ENCODE measurements at regions of chr18 and their contacts with region 1.

Region 1: DNA sequence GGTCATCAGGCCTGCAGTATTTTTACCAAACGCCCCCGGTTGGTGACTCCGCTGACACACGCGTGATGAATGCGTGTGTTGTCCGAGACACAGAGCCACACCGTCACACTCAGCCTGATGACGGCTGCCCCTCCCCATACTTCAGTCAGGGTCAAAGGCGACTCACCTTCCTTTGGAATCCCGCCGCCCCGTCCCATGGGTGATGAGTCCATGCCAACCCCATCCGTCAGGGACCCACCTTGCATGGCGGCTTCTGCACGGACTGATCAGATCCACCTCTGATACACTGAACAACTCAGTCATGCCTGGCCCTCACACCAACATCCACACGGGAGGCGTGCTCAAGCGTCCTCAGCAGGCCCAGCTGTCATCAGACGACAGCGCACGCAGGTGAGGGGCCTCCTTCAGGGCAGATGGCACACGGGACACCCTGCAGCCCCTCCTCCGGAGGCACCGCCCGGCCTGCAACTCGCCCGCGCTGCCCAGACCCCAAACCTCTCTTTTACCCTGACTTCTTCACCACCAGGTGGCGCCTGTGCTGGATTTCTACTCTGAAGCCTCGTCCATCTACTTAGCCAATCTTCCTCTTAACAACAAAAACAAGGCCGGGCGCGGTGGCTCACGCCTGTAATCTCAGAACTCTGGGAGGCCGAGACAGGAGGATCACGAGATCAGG is 89.2 kb downstream of the ZNF516 start:
- DNase-seq: peak; percentile 27
- ATAC-seq: peak; percentile 93
- H3K4me3 ChIP-seq: no peak overlapping the region
- H3K27ac ChIP-seq: no peak overlapping the region
- H3K4me1 ChIP-seq: no peaks in the 10 kb centered on the region
- H3K27me3 ChIP-seq: no peaks in the 10 kb centered on the region
- CTCF ChIP-seq: peak; percentile 56 to 61 (median 60); a peak in 5 of 6 replicates
- POLR2A ChIP-seq: no peak
- RAD21 ChIP-seq: peak; percentile 69

Region 2: DNA sequence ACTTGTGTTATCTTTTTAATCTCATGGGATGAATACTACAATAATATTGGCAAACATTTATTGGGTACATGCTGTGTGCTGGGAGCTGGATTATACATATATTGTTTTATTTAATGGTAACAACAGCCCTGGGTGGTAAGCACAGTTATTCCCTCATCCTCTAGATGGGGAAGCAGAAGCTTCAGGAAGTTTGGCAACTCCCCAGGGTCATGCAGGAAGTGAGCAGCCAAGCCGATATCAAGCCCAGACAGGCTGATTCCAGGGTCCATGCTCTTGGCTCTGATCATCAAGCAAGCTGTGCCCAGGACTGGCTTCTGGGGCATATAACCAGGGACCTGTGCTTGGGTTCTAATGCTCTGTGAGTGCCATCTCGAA is 66.6 kb before region 1 on chr18:
- CTCF ChIA-PET with region 1: no interaction called
- POLR2A ChIA-PET with region 1: no interaction called
- RAD21 ChIA-PET with region 1: no interaction called
- intact Hi-C with region 1: no loop called
- DNase-seq: no peak
- ATAC-seq: no peak
- H3K4me3 ChIP-seq: no peak overlapping the region
- H3K27ac ChIP-seq: no peak overlapping the region
- H3K4me1 ChIP-seq: no peaks in the 10 kb centered on the region
- H3K27me3 ChIP-seq: peaks cover 20% of the 10 kb centered on the region; the same call in 1 of the 2 replicates
- CTCF ChIP-seq: no peak
- POLR2A ChIP-seq: no peak
- RAD21 ChIP-seq: no peak

Region 3: DNA sequence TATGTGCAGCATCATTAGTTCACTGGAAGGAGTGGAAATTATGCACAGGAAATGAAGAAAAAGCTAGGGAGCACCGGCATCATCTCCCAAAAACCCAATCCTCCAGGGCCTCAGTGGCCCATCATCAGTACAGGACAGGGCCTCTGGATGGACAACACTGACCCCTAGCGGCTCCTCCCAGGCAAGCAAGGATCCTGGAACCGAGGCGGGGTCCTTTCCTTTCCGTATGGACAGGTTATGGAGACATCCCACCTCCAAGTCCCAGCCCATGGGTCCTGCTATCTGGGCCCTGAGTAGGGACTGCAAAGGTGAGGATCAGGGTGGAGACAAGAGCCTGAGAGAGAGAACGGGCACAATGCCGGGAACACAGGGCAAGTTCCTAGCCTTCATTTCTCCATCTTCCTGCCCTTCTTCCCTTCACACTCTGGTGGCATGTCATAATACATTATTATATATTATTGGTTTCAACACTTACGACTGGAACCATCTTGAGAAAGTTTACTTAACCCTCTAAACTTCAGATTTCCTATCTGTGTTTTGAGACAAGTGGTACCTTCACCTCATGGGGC is 21.0 kb after region 1 on chr18:
- CTCF ChIA-PET with region 1: no interaction called
- POLR2A ChIA-PET with region 1: no interaction called
- RAD21 ChIA-PET with region 1: no interaction called
- intact Hi-C with region 1: loop called (anchors 1 kb)
- DNase-seq: peak; percentile 13
- ATAC-seq: peak; percentile 91
- H3K4me3 ChIP-seq: no peak overlapping the region
- H3K27ac ChIP-seq: no peak overlapping the region
- H3K4me1 ChIP-seq: peaks cover 0 to 3% of the 10 kb centered on the region in 2 experiments; a peak in 1 of 4 replicates
- H3K27me3 ChIP-seq: no peaks in the 10 kb centered on the region
- CTCF ChIP-seq: peak; percentile 12 to 83 (median 79); a peak in 4 of 6 replicates
- POLR2A ChIP-seq: no peak
- RAD21 ChIP-seq: peak; percentile 39

Region 4: DNA sequence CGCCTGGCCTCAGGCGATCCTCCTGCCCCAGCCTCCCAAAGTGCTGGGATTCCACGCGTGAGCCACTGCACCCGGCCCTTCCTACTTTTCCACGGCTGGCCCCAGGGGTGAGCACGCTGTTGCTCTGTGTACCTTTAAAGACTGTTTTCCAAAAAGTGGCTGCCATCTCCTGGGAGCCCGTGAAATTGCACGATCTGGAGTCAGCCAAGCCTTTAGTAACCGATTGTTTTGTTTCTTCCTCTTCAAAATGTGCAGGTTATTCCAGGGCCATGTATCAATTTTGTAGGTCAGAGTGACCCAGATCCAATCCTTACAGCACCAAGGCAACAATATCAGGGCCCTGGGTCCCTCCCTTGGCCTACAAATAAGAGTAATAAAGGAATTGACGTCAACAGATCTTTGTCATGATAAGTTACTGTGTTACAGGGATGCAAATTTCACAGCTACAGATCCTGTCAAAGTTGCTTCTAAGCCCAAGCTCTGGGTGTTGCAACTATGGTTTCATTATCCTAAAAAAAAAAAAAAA is 281.0 kb after region 1 on chr18:
- CTCF ChIA-PET with region 1: interaction called, 9 read pairs
- POLR2A ChIA-PET with region 1: no interaction called
- RAD21 ChIA-PET with region 1: no interaction called
- intact Hi-C with region 1: loop called (anchors 1 kb)
- DNase-seq: peak; percentile 44
- ATAC-seq: peak; percentile 96
- H3K4me3 ChIP-seq: no peak overlapping the region
- H3K27ac ChIP-seq: no peak overlapping the region
- H3K4me1 ChIP-seq: peaks cover 2 to 6% of the 10 kb centered on the region in 2 experiments; a peak in 2 of 4 replicates
- H3K27me3 ChIP-seq: peaks cover 16% of the 10 kb centered on the region
- CTCF ChIP-seq: peak; percentile 63 to 74 (median 70); a peak in 5 of 6 replicates
- POLR2A ChIP-seq: no peak
- RAD21 ChIP-seq: peak; percentile 82